ENCODE measurements at regions of chr19 and their contacts with region 1.

Region 1: DNA sequence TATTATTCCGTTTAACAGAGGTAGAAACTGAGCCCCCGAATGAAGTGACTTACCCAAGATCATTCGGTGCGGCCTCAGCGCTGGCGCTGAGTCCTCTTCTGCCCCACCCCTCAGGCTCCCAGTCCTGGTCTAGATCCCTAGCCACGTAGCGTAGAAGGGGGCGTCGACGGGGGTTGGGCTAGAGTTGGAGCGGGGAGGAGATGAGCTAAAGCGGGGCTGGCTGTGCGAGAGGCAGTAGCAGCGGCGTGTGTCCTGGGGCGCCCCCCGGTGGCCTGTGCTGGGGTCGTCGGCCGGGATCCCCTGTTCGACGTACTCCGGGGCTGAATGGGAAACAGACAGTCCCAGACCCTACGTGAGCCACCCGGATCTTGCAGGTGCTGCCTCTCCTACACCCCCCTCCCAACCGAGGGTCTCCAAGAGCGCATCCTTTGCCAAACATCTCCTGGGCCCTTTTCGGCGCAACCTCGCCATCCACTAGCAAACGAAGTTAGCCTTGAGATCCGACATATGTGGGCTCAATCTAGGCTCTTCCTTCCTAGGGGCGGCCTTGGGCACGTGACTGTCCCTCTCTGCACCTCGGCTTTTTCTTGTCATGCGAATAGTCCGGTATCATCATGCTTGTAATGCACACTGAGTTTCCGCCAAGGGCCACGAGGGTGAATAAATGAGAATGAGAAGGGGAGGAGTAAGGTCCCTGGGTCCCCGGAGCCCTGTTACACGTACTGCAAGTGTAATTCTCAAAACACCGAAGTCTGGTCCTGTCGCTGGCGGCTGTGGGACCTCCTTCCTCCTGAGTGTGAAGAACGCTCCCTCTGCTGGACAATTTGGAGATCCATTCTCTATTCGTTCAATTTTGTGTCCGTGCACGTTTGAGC is 47.7 kb downstream of the CYP4F22 start:
- DNase-seq: peak; percentile 92 to 99 (median 96)
- ATAC-seq: peak; percentile 86
- H3K4me3 ChIP-seq: peak overlapping the region; percentile 60
- H3K4me3 Mint-ChIP-seq: peak overlapping the region; percentile 83
- H3K27ac ChIP-seq: peak overlapping the region; percentile 55 to 73
- H3K27ac Mint-ChIP-seq: peak overlapping the region; percentile 83
- H3K4me1 ChIP-seq: peaks cover 31% of the 10 kb centered on the region
- H3K4me1 Mint-ChIP-seq: peaks cover 16% of the 10 kb centered on the region
- H3K27me3 ChIP-seq: peaks cover 0 to 3% of the 10 kb centered on the region in 2 experiments
- H3K27me3 Mint-ChIP-seq: peaks cover 4% of the 10 kb centered on the region
- CTCF ChIP-seq: peak; percentile 81

Region 2: GRCh38 chr19:15091901-15092753 is 463.9 kb before region 1 on chr19:
- CTCF ChIA-PET with region 1: interaction called, 8 read pairs
- POLR2A ChIA-PET with region 1: interaction called, 6 read pairs
- intact Hi-C with region 1: loop called (anchors 1 kb)
- DNase-seq: peak in 13 of 14 experiments; percentile 9 to 86 (median 37)
- ATAC-seq: peak; percentile 73
- H3K4me3 ChIP-seq: no peak overlapping the region
- H3K4me3 Mint-ChIP-seq: peak overlapping the region; percentile 13
- H3K27ac ChIP-seq: no peak overlapping the region
- H3K27ac Mint-ChIP-seq: peak overlapping the region; percentile 56
- H3K4me1 ChIP-seq: peaks cover 8% of the 10 kb centered on the region
- H3K4me1 Mint-ChIP-seq: peaks cover 8% of the 10 kb centered on the region
- H3K27me3 ChIP-seq: peaks cover 0 to 13% of the 10 kb centered on the region in 2 experiments
- H3K27me3 Mint-ChIP-seq: peaks cover 10% of the 10 kb centered on the region
- CTCF ChIP-seq: peak; percentile 78

Region 3: GRCh38 chr19:15264061-15264932 is 291.7 kb before region 1 on chr19:
- CTCF ChIA-PET with region 1: interaction called, 4 read pairs
- POLR2A ChIA-PET with region 1: interaction called, 3 read pairs
- intact Hi-C with region 1: loop called (anchors 1 kb)
- DNase-seq: peak; percentile 58 to 82 (median 66)
- ATAC-seq: peak; percentile 80
- H3K4me3 ChIP-seq: no peak overlapping the region
- H3K4me3 Mint-ChIP-seq: no peak overlapping the region
- H3K27ac ChIP-seq: no peak overlapping the region
- H3K27ac Mint-ChIP-seq: no peak overlapping the region
- H3K4me1 ChIP-seq: no peaks in the 10 kb centered on the region
- H3K4me1 Mint-ChIP-seq: peaks cover 13% of the 10 kb centered on the region
- H3K27me3 ChIP-seq: no peaks in the 10 kb centered on the region
- H3K27me3 Mint-ChIP-seq: no peaks in the 10 kb centered on the region
- CTCF ChIP-seq: peak; percentile 75

Region 4: DNA sequence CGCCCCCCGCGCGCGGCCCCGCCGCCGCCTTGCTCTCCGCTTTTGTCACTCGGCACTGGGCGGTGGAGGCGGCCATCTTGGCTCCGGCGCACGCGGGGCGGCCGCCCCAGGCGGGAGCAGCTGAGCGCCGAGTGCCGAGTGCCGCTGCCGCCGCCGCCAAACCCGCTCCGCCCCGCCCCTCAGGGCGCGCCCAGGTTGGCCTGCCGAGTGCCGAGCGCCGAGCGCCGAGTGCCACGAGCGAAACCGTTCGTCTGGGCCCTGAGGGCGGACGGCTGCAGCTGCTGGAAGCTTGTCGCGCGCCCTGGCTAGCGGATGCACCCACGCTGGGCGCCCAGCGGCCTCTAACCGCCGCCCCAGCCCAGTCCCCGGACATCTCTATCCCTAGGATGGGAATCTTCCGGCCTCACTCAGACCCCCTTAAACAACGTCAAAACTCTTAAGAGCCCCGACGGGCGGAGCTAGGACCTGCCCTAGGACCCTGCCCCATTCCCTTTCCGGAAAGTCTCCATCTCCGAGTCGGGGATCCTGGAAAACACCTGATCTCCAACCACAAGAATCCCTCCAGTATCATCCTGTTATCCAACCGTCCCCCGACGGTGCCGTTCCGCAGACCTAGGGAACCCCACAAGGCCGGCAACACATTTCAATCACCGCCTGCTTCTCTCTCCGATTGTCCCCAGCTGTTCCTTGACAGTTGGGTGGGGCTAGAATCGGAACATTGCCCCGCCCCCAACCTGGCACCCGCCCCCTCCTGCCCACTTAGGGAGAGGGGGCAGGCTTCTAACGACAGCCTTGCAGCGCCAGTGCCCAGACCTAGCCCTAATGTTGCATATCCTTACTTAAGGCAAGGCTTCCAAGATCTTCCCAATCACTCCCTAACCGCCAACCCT is 123.1 kb before region 1 on chr19:
- CTCF ChIA-PET with region 1: interaction called, 14 read pairs
- POLR2A ChIA-PET with region 1: interaction called, 27 read pairs
- intact Hi-C with region 1: no loop called
- DNase-seq: peak; percentile 85 to 97 (median 92)
- ATAC-seq: peak; percentile 94
- H3K4me3 ChIP-seq: peak overlapping the region; percentile 87
- H3K4me3 Mint-ChIP-seq: peak overlapping the region; percentile 90
- H3K27ac ChIP-seq: peak overlapping the region; percentile 40 to 65
- H3K27ac Mint-ChIP-seq: peak overlapping the region; percentile 82
- H3K4me1 ChIP-seq: peaks cover 38% of the 10 kb centered on the region
- H3K4me1 Mint-ChIP-seq: peaks cover 28% of the 10 kb centered on the region
- H3K27me3 ChIP-seq: no peaks in the 10 kb centered on the region
- H3K27me3 Mint-ChIP-seq: no peaks in the 10 kb centered on the region
- CTCF ChIP-seq: no peak

Region 5: DNA sequence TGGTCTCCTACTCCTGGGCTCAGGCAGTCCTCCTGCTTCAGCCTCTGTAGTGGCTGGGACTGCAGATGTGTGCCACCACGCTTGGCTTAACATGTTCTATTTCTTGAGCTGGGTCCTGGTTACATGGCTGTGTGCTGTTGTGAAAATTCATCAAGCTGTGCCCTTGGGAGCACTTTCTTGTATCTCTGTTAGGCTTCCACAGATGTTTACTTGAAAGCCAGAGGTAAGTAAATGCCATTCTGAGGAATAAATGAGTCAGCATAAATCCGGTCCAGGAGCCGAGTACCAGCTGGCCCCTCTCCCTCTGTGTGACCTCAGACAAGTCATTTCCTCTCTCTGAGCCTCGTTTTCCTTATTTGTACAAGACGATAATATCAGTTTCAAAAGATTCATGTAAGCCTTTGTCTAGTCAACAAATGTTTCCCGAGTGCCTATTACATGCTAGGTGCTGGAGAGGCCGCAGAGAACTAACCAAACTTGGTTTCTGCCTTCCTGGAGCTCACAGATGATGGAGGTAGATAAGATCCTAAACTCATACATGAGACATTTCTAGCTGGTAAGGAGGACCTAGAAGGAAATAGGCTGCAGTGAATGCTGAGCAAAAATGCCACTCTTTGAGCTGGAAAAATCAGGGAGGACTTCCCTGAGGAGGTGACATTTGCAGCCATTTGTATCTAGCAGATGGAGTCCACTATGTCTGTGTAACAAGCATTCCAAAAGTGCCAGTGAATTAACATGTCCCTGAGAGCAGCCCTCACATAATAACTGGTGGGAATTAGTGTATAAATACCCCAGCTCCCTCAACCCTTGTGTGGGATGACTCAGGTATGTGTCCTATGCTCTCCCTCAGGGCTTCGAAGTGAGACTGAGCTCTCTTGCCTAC is 88.9 kb before region 1 on chr19:
- CTCF ChIA-PET with region 1: interaction called, 12 read pairs
- POLR2A ChIA-PET with region 1: interaction called, 39 read pairs
- intact Hi-C with region 1: loop called (anchors 5 kb)
- DNase-seq: peak in 13 of 14 experiments; percentile 31 to 87 (median 59)
- ATAC-seq: peak; percentile 43
- H3K4me3 ChIP-seq: no peak overlapping the region
- H3K4me3 Mint-ChIP-seq: peak overlapping the region; percentile 74
- H3K27ac ChIP-seq: peak overlapping the region; percentile 31 to 64
- H3K27ac Mint-ChIP-seq: peak overlapping the region; percentile 90
- H3K4me1 ChIP-seq: peaks cover 72% of the 10 kb centered on the region
- H3K4me1 Mint-ChIP-seq: peaks cover 58% of the 10 kb centered on the region
- H3K27me3 ChIP-seq: no peaks in the 10 kb centered on the region
- H3K27me3 Mint-ChIP-seq: no peaks in the 10 kb centered on the region
- CTCF ChIP-seq: no peak